BJ (cell line): ENCODE measurements at regions of chr5 and their contacts with region 1.

Region 1: DNA sequence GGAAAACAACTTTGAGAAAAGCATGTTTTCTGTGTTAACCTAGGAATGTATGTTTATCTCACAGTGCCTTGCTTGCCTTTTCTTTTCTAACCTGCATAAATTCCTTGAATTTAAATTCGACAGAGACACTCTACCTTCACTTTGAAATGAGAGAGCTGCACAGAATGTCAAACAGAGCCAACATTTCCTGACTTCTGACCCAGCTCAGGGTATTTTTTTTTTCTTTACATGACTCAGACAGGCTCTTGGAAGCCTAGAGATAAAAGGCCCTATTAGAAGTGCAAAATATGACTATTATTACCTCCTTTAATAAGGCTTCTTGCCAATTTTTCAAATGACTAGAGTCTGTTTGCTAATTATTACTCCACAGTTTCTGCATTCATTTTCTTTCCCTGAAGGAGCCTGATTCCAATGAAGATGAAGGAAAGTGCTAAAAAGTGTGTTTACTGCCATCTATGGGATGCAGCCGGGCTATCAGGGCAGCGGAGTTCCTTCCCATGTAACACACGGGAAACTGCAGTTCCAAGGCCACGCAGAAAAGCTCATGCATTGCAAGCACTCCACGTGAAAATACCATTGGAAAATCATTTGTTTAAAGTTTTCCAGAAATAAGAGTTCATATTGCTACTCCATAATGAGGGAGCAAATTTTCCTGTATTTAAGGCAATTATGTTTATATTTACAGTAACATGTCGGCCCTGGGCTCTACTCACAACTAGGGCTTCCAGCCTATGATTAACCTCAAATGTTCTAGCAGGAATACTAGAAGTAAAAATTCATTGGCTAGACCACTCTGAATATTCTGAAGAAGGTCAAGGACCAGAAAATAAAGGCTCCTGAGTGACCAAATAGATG is 485.6 kb downstream of the ZSWIM6 start:
- DNase-seq: no peak
- H3K4me3 ChIP-seq: no peak overlapping the region
- H3K27me3 ChIP-seq: peaks cover 5% of the 10 kb centered on the region
- CTCF ChIP-seq: peak; percentile 70

Region 2: GRCh38 chr5:61755726-61756222 is 61.9 kb before region 1 on chr5:
- CTCF ChIA-PET with region 1: no interaction called
- POLR2A ChIA-PET with region 1: interaction called, 15 read pairs
- DNase-seq: no peak
- H3K4me3 ChIP-seq: no peak overlapping the region
- H3K27me3 ChIP-seq: no peaks in the 10 kb centered on the region
- CTCF ChIP-seq: no peak

Region 3: DNA sequence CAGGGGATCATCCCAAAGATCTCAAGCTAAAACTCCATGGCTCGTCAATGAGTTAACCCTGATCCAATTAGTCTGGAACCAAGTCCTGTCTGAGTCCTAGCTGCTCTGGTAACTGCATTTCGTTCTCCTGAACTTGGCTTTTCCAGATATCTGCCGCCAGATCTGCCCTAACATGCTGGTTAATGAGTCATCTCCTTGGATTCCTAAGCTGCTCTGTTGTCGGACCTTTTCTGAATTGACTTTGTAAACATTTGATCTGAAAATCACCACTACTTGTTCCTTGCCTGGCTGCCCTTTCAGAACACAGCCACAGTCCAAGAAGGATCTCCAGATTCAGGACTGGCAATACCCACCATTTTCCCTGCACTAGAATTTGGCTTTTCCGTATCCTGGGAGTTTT is 12.6 kb before region 1 on chr5:
- CTCF ChIA-PET with region 1: interaction called, 16 read pairs
- POLR2A ChIA-PET with region 1: no interaction called
- DNase-seq: no peak
- H3K4me3 ChIP-seq: no peak overlapping the region
- H3K27me3 ChIP-seq: no peaks in the 10 kb centered on the region; the same call in 1 of the 2 replicates
- CTCF ChIP-seq: no peak